ENCODE measurements at regions of chr13 and their contacts with region 1.

Region 1: DNA sequence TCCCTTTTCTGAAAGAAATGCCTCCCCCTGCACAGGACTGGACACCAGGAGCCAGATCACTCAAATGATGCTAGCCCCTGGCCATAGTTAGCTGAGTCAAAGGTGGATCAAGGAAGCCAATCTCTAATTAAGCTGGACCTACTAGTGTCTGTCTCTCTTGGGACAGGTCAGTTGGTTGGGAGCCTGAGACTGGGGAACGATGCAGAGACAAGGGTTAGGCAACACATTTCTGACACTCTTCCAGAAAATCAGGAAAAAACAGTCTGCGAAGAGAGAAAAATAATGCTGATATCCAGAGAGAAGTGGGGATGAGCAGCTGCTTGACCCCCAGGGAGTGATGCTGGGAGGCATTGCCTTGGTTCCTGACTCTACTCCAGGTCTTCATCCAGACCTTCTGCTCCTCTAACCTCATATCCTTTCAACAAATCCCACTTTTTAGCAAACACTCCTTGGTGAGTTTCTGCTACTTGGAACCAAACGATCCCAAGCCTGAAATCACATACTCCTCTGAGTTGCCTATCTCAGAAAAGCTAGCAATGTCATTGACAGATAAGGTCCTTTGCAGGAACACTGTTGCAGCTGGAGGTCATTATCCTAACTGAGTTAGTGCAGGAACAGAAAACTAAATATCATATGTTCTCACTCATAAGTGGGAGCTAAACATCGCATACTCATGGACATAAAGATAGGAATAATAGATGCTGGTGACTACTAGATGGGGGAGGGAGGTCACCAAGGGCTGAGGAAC is 369.7 kb downstream of the COG6 start:
- DNase-seq: no peak
- H3K4me3 ChIP-seq: no peak overlapping the region
- H3K27ac ChIP-seq: no peak overlapping the region
- H3K4me1 ChIP-seq: peaks cover 12% of the 10 kb centered on the region
- CTCF ChIP-seq: no peak

Region 2: GRCh38 chr13:39888865-39889810 is 136.0 kb before region 1 on chr13:
- CTCF ChIA-PET with region 1: no interaction called
- POLR2A ChIA-PET with region 1: no interaction called
- intact Hi-C with region 1: no loop called
- DNase-seq: no peak
- H3K4me3 ChIP-seq: no peak overlapping the region
- H3K27ac ChIP-seq: no peak overlapping the region
- H3K4me1 ChIP-seq: no peaks in the 10 kb centered on the region
- CTCF ChIP-seq: no peak

Region 3: DNA sequence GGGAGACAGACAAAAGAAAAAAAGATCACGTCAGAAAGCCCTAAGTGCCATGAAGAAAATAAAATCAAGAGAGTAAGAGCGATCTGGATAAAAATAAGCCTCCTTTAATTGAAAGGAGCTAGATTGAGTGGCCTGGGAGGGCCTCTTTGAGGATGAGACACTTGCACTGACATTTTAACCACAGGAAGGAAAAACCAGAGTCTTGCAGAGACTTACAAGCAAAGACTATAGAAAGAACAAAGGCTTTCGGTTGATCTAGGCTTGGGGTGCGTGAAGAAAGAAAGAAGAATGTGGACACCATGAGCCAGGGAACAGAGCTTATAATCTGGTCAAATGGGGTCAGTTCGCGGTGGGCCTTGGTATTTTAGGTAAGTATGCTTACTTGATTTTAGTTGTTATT is 27.0 kb before region 1 on chr13:
- CTCF ChIA-PET with region 1: no interaction called
- POLR2A ChIA-PET with region 1: interaction called, 10 read pairs
- intact Hi-C with region 1: no loop called
- DNase-seq: no peak
- H3K4me3 ChIP-seq: no peak overlapping the region
- H3K27ac ChIP-seq: no peak overlapping the region
- H3K4me1 ChIP-seq: no peaks in the 10 kb centered on the region
- CTCF ChIP-seq: no peak

Region 4: DNA sequence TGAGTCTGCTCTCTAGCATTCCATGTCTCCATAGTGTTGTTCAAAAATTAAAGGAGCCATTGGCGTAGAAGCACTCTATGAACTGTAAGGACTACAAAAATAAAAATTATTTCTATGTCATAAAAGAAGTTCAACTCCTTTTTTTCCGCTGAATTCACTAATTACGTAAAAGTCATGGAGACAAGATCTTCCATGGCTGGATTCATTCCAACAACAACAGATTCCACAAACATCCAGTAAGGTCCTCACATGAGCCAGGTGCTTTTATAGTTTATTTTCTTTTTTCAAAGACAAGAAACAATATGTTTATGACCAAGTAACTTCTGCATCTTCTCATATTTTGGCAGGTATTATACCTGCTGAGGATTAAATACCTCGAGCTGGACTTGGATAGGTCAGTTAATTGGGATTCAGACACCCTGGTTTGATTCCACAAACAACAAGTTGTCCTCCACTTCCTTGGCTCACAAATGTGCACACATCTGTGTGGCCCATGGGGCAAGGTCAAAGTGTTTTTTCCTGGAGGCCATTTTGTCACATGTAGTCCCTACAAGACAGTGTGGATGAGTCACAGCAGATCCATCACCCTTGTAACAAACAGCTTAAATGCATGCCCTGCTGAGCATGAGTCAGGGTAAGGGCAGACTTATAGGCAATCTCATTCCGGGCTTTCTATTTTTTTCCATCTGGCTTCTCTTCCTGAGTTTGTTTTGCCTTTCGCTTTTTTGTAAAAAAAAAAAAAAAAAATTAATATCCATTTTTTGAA is 105.9 kb after region 1 on chr13:
- CTCF ChIA-PET with region 1: no interaction called
- POLR2A ChIA-PET with region 1: no interaction called
- intact Hi-C with region 1: no loop called
- DNase-seq: no peak
- H3K4me3 ChIP-seq: no peak overlapping the region
- H3K27ac ChIP-seq: no peak overlapping the region
- H3K4me1 ChIP-seq: peaks cover 39% of the 10 kb centered on the region
- CTCF ChIP-seq: no peak